Endothelial cell of umbilical vein (primary cell): ENCODE measurements at regions of chr1 and their contacts with region 1.

Region 1: DNA sequence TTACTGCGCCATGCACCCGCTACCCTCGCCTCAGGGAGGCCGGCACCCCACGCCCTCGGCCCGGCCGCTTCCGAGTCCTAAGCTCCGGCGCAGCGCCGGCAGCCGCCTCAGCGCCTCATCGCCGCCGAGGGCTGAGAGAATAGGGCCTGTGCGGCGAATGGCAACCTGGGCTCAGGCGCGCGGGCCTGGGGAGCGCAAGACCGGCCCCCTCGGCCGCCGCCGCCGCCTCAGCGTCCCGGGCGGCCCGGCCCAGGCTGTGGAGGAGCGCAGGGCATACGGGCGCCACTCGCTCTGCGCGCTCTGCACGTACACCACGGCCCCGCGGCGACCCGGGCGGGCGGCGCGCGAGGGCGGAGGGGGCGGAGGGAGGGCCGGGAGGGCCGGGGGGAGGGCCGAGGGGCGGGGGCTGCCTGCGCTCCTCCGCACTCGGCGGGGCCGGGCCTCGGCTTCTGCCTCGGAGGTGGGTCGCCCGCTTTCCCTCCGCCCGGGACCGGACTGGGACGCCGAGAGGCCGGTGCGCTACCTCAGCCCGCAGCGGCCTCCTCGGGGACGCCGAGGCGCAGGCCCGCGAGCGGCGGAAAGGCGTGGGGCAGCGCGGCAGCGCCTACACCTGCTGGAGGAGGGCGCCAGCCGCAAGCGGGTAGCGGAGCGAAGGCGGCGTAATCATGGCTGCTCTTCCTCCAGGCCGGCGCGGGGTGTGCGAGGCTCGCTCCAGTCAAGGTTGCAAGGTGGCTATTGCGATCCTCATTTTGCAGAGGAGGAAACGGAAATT is at the start of gene EGLN1:
- DNase-seq: peak; percentile 95
- H3K4me3 ChIP-seq: peak within 1 kb of the TSS; percentile 63 to 97 (median 91)
- H3K27ac ChIP-seq: peak within 1 kb of the TSS; percentile 89
- H3K4me1 ChIP-seq: peaks cover 43% of the 10 kb centered on the region
- H3K27me3 ChIP-seq: no peaks in the 10 kb centered on the region
- CTCF ChIP-seq: peak; percentile 14 to 33
- POLR2A ChIP-seq: peak; percentile 84
- total RNA-seq, gene EGLN1: 37.4 and 38.1 TPM in 2 replicates

Region 2: GRCh38 chr1:231091831-231092301 is 330.3 kb before region 1 on chr1:
- CTCF ChIA-PET with region 1: no interaction called
- POLR2A ChIA-PET with region 1: no interaction called
- dilution Hi-C with region 1: no loop called
- intact Hi-C with region 1: no loop called
- DNase-seq: peak; percentile 61
- H3K4me3 ChIP-seq: no peak overlapping the region
- H3K27ac ChIP-seq: no peak overlapping the region
- H3K4me1 ChIP-seq: no peaks in the 10 kb centered on the region
- H3K27me3 ChIP-seq: peaks cover 7 to 13% of the 10 kb centered on the region in 2 experiments
- CTCF ChIP-seq: peak; percentile 71 to 73
- POLR2A ChIP-seq: no peak

Region 3: DNA sequence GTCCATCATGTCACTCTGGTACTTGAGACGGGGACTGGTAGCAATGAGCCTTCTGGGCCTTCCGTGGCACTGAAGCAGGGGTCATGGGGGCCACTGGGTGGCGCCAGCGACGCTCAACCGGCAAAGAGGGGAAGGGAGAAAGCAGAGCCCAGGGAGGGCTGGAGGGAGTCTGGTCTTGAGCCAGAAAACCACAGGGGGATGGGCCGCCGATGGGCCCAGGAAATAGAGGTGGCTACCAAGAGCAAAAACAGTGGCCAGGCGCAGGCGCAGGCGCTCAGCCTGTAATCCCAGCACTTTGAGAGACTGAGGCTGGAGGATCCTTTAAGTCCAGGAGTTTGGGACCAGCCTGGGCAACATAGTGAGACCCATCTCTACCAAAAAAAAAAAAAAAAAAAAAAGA is 106.3 kb before region 1 on chr1:
- CTCF ChIA-PET with region 1: no interaction called
- POLR2A ChIA-PET with region 1: no interaction called
- dilution Hi-C with region 1: no loop called
- intact Hi-C with region 1: no loop called
- DNase-seq: peak; percentile 59
- H3K4me3 ChIP-seq: no peak overlapping the region
- H3K27ac ChIP-seq: no peak overlapping the region
- H3K4me1 ChIP-seq: no peaks in the 10 kb centered on the region
- H3K27me3 ChIP-seq: no peaks in the 10 kb centered on the region
- CTCF ChIP-seq: peak; percentile 70 to 83
- POLR2A ChIP-seq: no peak

Region 4: DNA sequence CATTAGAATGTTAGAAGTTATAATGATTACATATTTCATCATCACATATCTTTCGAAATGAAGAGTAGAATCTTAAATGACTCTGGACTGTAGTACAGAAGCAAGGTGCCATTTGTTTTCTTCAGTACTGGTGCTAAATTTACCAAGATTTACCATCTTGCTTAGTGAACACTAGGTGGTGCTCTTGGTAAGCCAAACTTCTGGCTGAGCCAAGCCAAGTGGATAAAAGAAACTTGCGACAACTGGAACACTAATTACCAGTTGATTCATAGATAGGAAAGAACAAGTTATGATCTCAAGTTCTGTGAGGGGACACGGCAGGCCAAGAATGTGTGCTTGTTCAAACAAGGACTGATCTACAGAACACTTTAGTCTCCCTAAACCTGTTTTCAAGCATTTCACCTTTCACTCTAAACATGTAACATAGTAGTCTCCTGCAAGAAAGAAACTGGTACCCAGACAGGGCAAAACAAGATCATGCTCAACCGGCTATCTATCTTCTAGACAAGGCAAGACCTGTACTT is 64.3 kb before region 1 on chr1:
- CTCF ChIA-PET with region 1: interaction called, 39 read pairs
- POLR2A ChIA-PET with region 1: no interaction called
- dilution Hi-C with region 1: no loop called
- intact Hi-C with region 1: loop called (anchors 1 kb)
- DNase-seq: peak; percentile 82
- H3K4me3 ChIP-seq: no peak overlapping the region
- H3K27ac ChIP-seq: no peak overlapping the region
- H3K4me1 ChIP-seq: peaks cover 7% of the 10 kb centered on the region
- H3K27me3 ChIP-seq: no peaks in the 10 kb centered on the region
- CTCF ChIP-seq: peak; percentile 54
- POLR2A ChIP-seq: no peak

Region 5: GRCh38 chr1:231387770-231388669 is 34.2 kb before region 1 on chr1:
- CTCF ChIA-PET with region 1: interaction called, 4 read pairs
- POLR2A ChIA-PET with region 1: no interaction called
- dilution Hi-C with region 1: no loop called
- intact Hi-C with region 1: loop called (anchors 1 kb)
- DNase-seq: peak; percentile 88
- H3K4me3 ChIP-seq: no peak overlapping the region
- H3K27ac ChIP-seq: peak overlapping the region; percentile 98
- H3K4me1 ChIP-seq: peaks cover 39% of the 10 kb centered on the region
- H3K27me3 ChIP-seq: no peaks in the 10 kb centered on the region
- CTCF ChIP-seq: no peak
- POLR2A ChIP-seq: peak; percentile 51

Region 6: DNA sequence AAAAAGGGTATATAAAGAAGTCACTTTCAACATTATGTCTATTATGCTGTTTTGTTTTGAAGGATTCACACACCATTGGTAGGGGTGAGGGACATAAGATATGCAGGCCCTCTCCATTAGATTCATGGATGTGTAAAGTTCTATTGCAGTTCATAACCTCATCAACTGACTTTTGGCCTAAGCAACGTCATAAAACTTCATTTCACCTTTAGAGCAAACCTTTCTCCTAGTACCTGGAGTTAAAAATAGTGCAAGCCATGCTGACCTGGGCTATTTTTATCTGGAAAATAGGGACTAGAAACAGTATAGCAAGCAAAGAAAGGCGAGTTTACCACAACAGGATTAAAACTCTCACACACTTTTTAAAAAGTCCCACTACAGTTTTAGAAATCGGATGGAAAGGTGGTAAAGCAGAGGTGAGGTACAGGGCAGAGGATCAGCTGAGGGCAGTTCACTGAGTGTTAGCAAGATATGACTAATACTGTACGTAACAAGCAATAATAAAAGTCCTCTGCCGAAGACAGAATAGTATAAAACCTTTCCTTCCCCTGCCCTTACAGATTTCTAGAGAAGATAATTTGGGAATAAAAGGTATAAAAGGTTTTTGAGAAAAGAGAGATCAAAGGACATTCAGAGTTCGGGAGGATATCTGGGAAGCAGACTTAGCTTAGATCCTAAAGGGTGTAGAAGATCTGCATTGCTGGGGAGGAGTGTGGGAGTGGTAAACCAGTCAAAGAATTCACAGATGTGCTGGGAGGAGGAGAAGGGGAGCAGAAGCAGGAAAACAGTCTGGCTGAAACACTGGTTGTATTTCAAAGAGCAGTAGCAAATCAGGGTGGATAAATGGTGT is 14.4 kb before region 1 on chr1:
- CTCF ChIA-PET with region 1: interaction called, 6 read pairs
- POLR2A ChIA-PET with region 1: no interaction called
- dilution Hi-C with region 1: no loop called
- intact Hi-C with region 1: loop called (anchors 1 kb)
- DNase-seq: peak; percentile 75
- H3K4me3 ChIP-seq: no peak overlapping the region
- H3K27ac ChIP-seq: peak overlapping the region; percentile 45
- H3K4me1 ChIP-seq: peaks cover 20% of the 10 kb centered on the region
- H3K27me3 ChIP-seq: no peaks in the 10 kb centered on the region
- CTCF ChIP-seq: no peak
- POLR2A ChIP-seq: no peak

Region 7: DNA sequence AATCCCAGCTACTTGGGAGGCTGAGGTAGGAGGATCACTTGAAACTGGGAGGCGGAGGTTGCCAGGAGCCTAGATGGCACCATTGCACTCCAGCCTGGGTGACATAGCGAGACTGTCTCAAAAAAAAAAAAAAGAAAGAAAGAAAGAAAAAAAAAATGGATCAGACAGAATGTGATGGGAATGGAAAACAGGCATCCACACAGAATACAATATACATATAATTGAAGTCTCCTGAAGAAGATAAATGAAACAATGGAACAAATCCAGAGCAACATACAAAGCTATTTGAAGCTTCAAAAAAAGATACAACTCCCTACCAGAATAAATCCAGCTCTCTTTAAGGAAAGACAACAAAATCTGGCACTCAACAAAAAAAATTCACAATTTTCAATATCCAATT is 10.8 kb after region 1 on chr1:
- CTCF ChIA-PET with region 1: no interaction called
- POLR2A ChIA-PET with region 1: no interaction called
- dilution Hi-C with region 1: no loop called
- intact Hi-C with region 1: no loop called
- DNase-seq: no peak
- H3K4me3 ChIP-seq: no peak overlapping the region
- H3K27ac ChIP-seq: no peak overlapping the region
- H3K4me1 ChIP-seq: no peaks in the 10 kb centered on the region
- H3K27me3 ChIP-seq: no peaks in the 10 kb centered on the region
- CTCF ChIP-seq: no peak
- POLR2A ChIP-seq: no peak

Region 8: DNA sequence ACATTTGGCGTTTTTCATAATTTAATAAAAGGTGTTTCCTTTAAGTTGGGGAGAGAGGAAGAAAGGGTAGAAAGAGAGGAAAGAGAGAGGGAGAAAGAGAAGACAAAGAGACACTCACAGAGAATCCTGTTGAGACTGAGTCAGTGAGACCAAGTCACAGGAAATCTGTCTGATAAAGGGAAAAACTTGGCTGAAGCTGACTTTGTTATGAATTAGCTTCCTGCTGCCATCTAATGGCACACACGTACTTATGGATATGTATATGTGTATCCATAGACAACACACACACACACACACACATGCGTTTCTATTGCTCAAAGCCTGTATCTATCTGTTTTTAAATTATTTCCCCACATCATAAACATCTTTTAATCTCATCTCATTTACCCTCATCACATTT is 161.9 kb after region 1 on chr1:
- CTCF ChIA-PET with region 1: interaction called, 7 read pairs
- POLR2A ChIA-PET with region 1: interaction called, 3 read pairs
- dilution Hi-C with region 1: no loop called
- intact Hi-C with region 1: loop called (anchors 1 kb)
- DNase-seq: peak; percentile 88
- H3K4me3 ChIP-seq: no peak overlapping the region
- H3K27ac ChIP-seq: peak overlapping the region; percentile 47
- H3K4me1 ChIP-seq: peaks cover 8% of the 10 kb centered on the region
- H3K27me3 ChIP-seq: no peaks in the 10 kb centered on the region
- CTCF ChIP-seq: peak in 1 of 2 donors; percentile 20
- POLR2A ChIP-seq: no peak